Activated T-helper 2 cell treated with anti-CD3 and anti-CD28 coated beads, Interferon-gamma antibody, Interleukin-2, Interleukin-4, amounts not matched to agents 10 μg/mL and 5 μg/mL and 100 μg/mL, durations not matched to agents 14 hours and 24 hours and 36 hours (primary cell): ENCODE measurements at regions of chr6 and their contacts with region 1.

Region 1: DNA sequence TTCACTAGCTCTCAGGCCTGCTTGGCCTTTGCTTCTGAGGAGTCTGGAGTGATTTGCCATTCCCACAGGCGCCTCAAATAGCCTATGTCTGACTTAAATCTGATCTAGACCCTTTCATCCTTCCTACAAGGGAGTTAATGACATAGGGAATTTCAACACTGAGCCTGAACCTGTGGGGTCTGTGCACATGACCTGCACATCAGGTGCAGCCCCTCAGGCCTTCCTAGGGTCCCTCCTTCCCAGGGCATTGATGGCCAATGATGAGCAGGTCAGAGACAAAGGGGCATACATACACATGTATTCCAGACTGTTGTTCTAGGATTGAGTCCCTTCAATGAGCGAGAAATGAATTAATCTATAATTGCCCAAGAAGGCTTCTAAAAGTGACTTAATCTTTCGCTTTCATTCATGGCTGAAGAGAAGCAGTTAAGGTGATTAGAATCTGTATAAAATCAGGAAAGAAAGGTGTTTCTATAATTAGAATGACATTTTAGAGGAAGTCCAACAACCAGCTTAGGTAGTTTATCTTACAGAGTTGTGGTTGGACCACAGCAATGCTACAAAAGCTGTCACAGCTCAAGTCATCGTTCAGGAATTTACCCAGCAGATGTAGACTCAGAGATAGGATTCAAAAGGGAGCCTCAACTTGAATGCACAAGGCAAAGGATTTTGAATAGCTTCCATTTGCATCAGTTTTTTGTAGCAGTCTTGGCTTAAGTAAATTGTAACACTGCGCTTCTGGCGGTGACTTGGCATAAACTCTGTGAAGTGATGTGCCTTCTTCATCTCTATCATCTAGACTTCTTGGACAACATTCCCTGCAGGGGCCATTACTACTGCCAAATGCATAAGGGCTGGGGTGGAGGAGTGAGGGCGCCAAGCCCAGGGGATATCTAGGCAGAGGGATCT is 27.0 kb upstream of the TBC1D7 start:
- DNase-seq: peak; percentile 39
- H3K4me3 Mint-ChIP-seq: peak overlapping the region; percentile 71
- H3K27ac Mint-ChIP-seq: peak overlapping the region; percentile 93
- H3K4me1 Mint-ChIP-seq: peaks cover 51% of the 10 kb centered on the region
- H3K27me3 Mint-ChIP-seq: no peaks in the 10 kb centered on the region

Region 2: GRCh38 chr6:12851123-12851695 is 504.1 kb before region 1 on chr6:
- intact Hi-C with region 1: no loop called
- DNase-seq: no peak
- H3K4me3 Mint-ChIP-seq: no peak overlapping the region
- H3K27ac Mint-ChIP-seq: no peak overlapping the region
- H3K4me1 Mint-ChIP-seq: no peaks in the 10 kb centered on the region
- H3K27me3 Mint-ChIP-seq: no peaks in the 10 kb centered on the region

Region 3: GRCh38 chr6:13302751-13303667 is 52.3 kb before region 1 on chr6:
- intact Hi-C with region 1: loop called (anchors 1 kb)
- DNase-seq: peak; percentile 32
- H3K4me3 Mint-ChIP-seq: no peak overlapping the region
- H3K27ac Mint-ChIP-seq: peak overlapping the region; percentile 66
- H3K4me1 Mint-ChIP-seq: peaks cover 22% of the 10 kb centered on the region
- H3K27me3 Mint-ChIP-seq: no peaks in the 10 kb centered on the region

Region 4: GRCh38 chr6:13319891-13320564 is 35.3 kb before region 1 on chr6:
- intact Hi-C with region 1: no loop called
- DNase-seq: no peak
- H3K4me3 Mint-ChIP-seq: no peak overlapping the region
- H3K27ac Mint-ChIP-seq: no peak overlapping the region
- H3K4me1 Mint-ChIP-seq: peaks cover 1% of the 10 kb centered on the region
- H3K27me3 Mint-ChIP-seq: no peaks in the 10 kb centered on the region

Region 5: GRCh38 chr6:13375360-13375878 is 20.1 kb after region 1 on chr6:
- intact Hi-C with region 1: loop called (anchors 1 kb)
- DNase-seq: no peak
- H3K4me3 Mint-ChIP-seq: no peak overlapping the region
- H3K27ac Mint-ChIP-seq: no peak overlapping the region
- H3K4me1 Mint-ChIP-seq: peaks cover 16% of the 10 kb centered on the region
- H3K27me3 Mint-ChIP-seq: no peaks in the 10 kb centered on the region

Region 6: DNA sequence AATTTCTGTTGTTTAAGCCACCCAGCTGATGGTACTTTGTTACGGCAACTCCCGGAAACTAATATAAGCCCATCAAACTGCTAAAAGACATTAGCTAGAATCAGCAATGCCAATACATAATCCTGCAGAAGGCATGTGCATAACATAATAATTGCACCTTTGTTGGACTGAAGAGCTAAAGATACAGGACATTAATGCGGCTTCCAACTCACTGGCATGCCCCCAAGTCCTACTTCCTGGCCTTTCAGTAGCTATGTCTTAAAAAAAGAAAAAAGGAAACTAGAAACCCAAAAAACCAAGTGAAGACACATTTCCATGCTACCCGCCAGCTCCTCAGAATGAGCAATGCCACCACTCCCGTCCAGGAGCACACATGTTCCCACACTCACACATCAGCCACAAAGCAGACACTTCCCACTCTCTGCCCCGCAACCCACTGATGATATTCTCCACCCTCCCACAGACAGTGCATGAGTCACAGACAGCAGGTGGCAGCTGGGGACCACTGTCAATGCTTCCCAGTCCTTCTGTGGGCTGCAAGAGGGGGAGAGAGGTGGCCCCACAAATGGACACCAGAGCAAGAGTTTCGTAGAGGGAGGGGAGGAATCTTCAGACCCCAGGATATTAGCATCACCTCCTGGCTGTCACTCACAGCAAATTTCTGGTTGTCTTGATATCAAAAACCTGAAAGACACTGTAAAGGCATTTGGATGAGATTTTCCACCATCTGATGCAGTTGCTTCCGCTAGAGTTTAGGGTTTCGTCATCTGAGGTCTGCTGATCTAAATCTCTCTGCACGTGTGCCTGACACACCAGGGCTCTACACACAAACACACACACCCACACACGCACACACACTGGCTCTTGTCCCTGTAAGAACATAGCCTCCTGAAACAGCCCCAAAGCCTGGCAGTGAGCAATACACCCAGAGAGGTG is 99.3 kb after region 1 on chr6:
- intact Hi-C with region 1: loop called (anchors 1 kb)
- DNase-seq: peak; percentile 52
- H3K4me3 Mint-ChIP-seq: peak overlapping the region; percentile 30
- H3K27ac Mint-ChIP-seq: peak overlapping the region; percentile 71
- H3K4me1 Mint-ChIP-seq: peaks cover 47% of the 10 kb centered on the region
- H3K27me3 Mint-ChIP-seq: no peaks in the 10 kb centered on the region

Region 7: GRCh38 chr6:13500264-13500663 is 145.0 kb after region 1 on chr6:
- intact Hi-C with region 1: no loop called
- DNase-seq: no peak
- H3K4me3 Mint-ChIP-seq: no peak overlapping the region
- H3K27ac Mint-ChIP-seq: no peak overlapping the region
- H3K4me1 Mint-ChIP-seq: peaks cover 3% of the 10 kb centered on the region
- H3K27me3 Mint-ChIP-seq: peaks cover 2% of the 10 kb centered on the region